ENCODE measurements at regions of chr1 and their contacts with region 1.

Region 1: DNA sequence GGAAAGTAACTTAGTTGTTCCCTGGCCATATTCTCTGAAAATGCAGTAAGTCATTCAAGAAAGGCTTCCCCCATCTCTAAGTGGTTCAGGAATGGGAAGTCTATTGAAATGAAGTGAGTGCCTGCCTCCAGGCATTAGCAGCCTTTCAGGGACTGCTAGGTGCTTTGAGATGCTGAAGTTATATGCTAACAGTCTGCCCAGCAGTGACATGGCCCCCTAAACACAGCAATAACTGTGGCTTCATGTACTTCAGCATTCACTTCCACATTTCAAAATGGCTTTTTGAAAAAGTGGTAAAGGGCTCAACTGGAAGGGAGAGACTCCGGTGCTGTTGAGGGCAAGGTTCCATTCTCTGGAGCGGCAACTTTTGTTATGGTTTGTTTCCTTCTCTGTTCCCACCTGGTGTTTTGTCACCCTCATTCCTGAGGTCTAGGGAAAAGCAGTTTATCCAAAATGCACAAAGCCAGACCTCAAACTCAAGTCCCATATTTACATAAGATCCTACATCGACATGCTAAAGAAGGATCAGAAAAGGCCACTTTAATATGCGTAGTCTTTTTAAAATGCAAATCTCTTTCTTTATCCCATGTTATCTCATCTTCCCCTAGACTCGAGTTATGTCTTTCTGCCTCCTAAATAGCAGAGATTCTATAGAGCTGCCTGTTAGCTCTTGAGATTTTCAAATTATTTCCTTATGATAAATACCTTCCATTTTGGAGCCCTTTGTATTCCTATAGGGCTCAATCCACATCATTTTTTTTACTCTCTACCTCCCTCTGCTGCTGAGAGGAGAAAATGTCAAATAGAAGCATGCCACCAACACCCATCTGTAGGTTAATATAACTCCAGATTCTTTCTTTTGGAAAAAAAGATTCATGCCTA is 34.2 kb upstream of the LRRC8C start:
- DNase-seq: no peak
- ATAC-seq: no peak
- H3K4me3 Mint-ChIP-seq: no peak overlapping the region
- H3K27ac Mint-ChIP-seq: peak overlapping the region; percentile 64
- H3K4me1 Mint-ChIP-seq: peaks cover 81% of the 10 kb centered on the region
- H3K27me3 Mint-ChIP-seq: no peaks in the 10 kb centered on the region
- CTCF ChIP-seq: peak; percentile 95

Region 2: GRCh38 chr1:89584211-89584610 is 14.5 kb before region 1 on chr1:
- CTCF ChIA-PET with region 1: interaction called, 14 read pairs
- POLR2A ChIA-PET with region 1: interaction called, 3 read pairs
- intact Hi-C with region 1: no loop called
- DNase-seq: no peak
- ATAC-seq: no peak
- H3K4me3 Mint-ChIP-seq: no peak overlapping the region
- H3K27ac Mint-ChIP-seq: no peak overlapping the region
- H3K4me1 Mint-ChIP-seq: peaks cover 70% of the 10 kb centered on the region
- H3K27me3 Mint-ChIP-seq: no peaks in the 10 kb centered on the region
- CTCF ChIP-seq: no peak

Region 3: GRCh38 chr1:89643577-89643976 is 44.9 kb after region 1 on chr1:
- CTCF ChIA-PET with region 1: no interaction called
- POLR2A ChIA-PET with region 1: no interaction called
- intact Hi-C with region 1: no loop called
- DNase-seq: no peak
- ATAC-seq: no peak
- H3K4me3 Mint-ChIP-seq: no peak overlapping the region
- H3K27ac Mint-ChIP-seq: peak overlapping the region; percentile 77
- H3K4me1 Mint-ChIP-seq: peaks cover 62% of the 10 kb centered on the region
- H3K27me3 Mint-ChIP-seq: no peaks in the 10 kb centered on the region
- CTCF ChIP-seq: no peak

Measured in activated CD8-positive, alpha-beta T cell treated with anti-CD3 and anti-CD28 coated beads for 36 hours (primary cell).